ENCODE measurements at regions of chr11 and their contacts with region 1.

Region 1: GRCh38 chr11:57936050-57936418 is 87.6 kb upstream of the OR9Q1 start:
- DNase-seq: no peak
- ATAC-seq: peak in 2 of 4 donors; percentile 39 to 85
- H3K4me3 ChIP-seq: no peak overlapping the region
- H3K27ac ChIP-seq: peak overlapping the region in 9 of 12 donors; percentile 2 to 64 (median 42)
- H3K4me1 ChIP-seq: peaks cover 0 to 7% (median 0%) of the 10 kb centered on the region in 12 donors
- H3K27me3 ChIP-seq: no peaks in the 10 kb centered on the region
- CTCF ChIP-seq: no peak
- POLR2A ChIP-seq: no peak

Region 2: DNA sequence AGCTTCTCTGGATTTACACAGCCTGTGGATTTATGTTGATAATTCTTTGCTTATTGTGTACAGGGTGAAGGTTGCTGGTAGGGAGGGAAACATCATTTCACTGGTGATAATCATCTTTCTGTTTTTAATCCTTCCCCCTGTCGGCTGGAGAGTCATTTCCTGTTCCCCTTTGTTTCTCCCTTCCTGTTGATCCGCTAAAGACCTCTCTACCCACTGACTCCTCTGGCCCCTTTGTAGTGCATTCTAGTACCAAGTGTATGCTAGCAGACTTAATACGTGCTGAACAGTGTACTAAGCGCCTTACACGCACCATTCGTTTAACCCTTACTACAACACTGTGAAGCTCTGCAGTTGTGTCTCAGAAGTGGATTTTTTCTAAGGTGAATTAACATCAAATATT is 68.6 kb after region 1 on chr11:
- intact Hi-C with region 1: loop called in 2 of 10 experiments (anchors 5 kb)
- DNase-seq: peak in 1 of 5 donors; percentile 32
- ATAC-seq: peak; percentile 64 to 95 (median 82)
- H3K4me3 ChIP-seq: no peak overlapping the region
- H3K27ac ChIP-seq: peak overlapping the region; percentile 40 to 80 (median 61)
- H3K4me1 ChIP-seq: peaks cover 0 to 27% (median 5%) of the 10 kb centered on the region in 12 donors
- H3K27me3 ChIP-seq: no peaks in the 10 kb centered on the region
- CTCF ChIP-seq: no peak
- POLR2A ChIP-seq: no peak

Region 3: GRCh38 chr11:58358969-58359368 is 422.9 kb after region 1 on chr11 and contains the start of gene OR5B17:
- intact Hi-C with region 1: no loop called
- DNase-seq: no peak
- ATAC-seq: no peak
- H3K4me3 ChIP-seq: no peak within 1 kb of the TSS
- H3K27ac ChIP-seq: no peak within 1 kb of the TSS
- H3K4me1 ChIP-seq: no peaks in the 10 kb centered on the region
- H3K27me3 ChIP-seq: no peaks in the 10 kb centered on the region
- CTCF ChIP-seq: no peak
- POLR2A ChIP-seq: no peak
- total RNA-seq, gene OR5B17: not detected

Measured in heart left ventricle (tissue), 16 donors.